ENCODE measurements at regions of chr3 and their contacts with region 1.

Region 1: GRCh38 chr3:16378920-16379319 is 113.9 kb downstream of the OXNAD1 start:
- DNase-seq: peak; percentile 45
- ATAC-seq: peak; percentile 66
- H3K4me3 Mint-ChIP-seq: no peak overlapping the region
- H3K27ac Mint-ChIP-seq: peak overlapping the region; percentile 89
- H3K4me1 Mint-ChIP-seq: peaks cover 95% of the 10 kb centered on the region
- H3K27me3 Mint-ChIP-seq: no peaks in the 10 kb centered on the region

Region 2: DNA sequence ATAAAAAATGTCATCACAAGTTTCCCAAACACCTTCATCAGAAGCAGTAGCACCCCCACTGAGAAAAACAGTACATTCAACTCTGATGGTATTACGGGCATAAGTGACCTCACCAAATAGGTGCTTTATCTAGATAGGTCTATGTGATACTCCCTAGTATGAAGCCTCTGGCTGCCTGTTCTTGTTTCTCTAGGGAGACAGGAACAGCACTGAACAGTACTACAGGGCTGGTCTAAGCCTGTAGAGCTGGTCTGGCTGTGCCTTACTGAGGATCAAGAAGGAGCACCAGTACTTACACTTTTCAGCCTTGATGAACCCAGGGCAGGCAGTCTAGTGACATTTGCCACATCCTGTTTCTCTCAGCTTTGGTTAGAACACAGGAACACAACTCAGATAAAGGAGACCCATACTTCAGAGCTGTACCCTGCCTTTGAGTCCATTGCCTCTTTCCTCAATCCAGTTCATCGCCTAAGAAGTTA is 78.0 kb before region 1 on chr3:
- CTCF ChIA-PET with region 1: interaction called, 3 read pairs
- POLR2A ChIA-PET with region 1: interaction called, 4 read pairs
- intact Hi-C with region 1: loop called in 1 of 2 experiments (anchors 5 kb)
- DNase-seq: peak; percentile 53
- ATAC-seq: peak; percentile 55
- H3K4me3 Mint-ChIP-seq: peak overlapping the region; percentile 66
- H3K27ac Mint-ChIP-seq: peak overlapping the region; percentile 96
- H3K4me1 Mint-ChIP-seq: peaks cover 98% of the 10 kb centered on the region
- H3K27me3 Mint-ChIP-seq: no peaks in the 10 kb centered on the region

Region 3: GRCh38 chr3:16338999-16339398 is 39.9 kb before region 1 on chr3:
- CTCF ChIA-PET with region 1: interaction called, 6 read pairs
- POLR2A ChIA-PET with region 1: no interaction called
- intact Hi-C with region 1: loop called in 1 of 2 experiments (anchors 2 kb)
- DNase-seq: peak; percentile 35
- ATAC-seq: peak; percentile 80
- H3K4me3 Mint-ChIP-seq: no peak overlapping the region
- H3K27ac Mint-ChIP-seq: peak overlapping the region; percentile 84
- H3K4me1 Mint-ChIP-seq: peaks cover 62% of the 10 kb centered on the region
- H3K27me3 Mint-ChIP-seq: no peaks in the 10 kb centered on the region

Region 4: GRCh38 chr3:16467393-16467792 is 88.5 kb after region 1 on chr3:
- CTCF ChIA-PET with region 1: no interaction called
- POLR2A ChIA-PET with region 1: no interaction called
- intact Hi-C with region 1: loop called in 1 of 2 experiments (anchors 5 kb)
- DNase-seq: peak; percentile 78
- ATAC-seq: peak; percentile 79
- H3K4me3 Mint-ChIP-seq: peak overlapping the region; percentile 50
- H3K27ac Mint-ChIP-seq: peak overlapping the region; percentile 92
- H3K4me1 Mint-ChIP-seq: peaks cover 66% of the 10 kb centered on the region
- H3K27me3 Mint-ChIP-seq: no peaks in the 10 kb centered on the region

Measured in activated CD4-positive, alpha-beta T cell treated with anti-CD3 and anti-CD28 coated beads for 36 hours (primary cell).